ENCODE measurements at regions of chr10 and their contacts with region 1.

Region 1: DNA sequence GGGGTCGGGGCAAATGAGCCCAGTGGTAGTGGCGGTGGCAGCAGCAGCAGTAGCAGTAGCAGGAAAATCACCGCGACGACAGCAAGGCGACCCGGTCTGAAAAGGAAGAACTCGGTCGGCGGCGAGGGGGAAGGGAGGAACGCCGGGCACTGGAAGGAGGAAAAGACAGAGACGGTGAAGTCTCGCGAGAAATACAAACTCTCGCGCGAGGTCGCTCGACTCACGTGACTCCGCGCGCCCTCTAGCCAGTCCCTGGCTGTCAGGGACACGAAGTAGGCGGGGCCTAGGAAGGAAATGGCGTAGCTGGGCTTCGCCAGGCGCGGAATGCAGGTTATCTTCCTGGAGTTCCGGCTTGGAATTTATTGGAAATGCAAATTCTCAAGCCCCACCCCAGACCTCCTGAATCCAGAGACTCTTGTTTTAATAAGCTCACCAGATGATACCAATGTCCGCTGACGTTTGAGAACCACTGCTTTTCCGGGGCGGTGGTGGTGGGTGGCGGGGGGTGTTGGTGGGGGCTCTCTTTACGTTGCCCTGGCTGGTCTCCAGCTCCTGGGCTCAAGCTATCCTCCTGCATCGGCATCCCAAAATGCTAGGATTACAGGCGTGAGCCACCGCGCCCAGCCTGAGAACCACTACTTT is at the start of gene SMNDC1:
- DNase-seq: peak; percentile 97 to 99 (median 98)
- H3K4me3 ChIP-seq: peak within 1 kb of the TSS; percentile 68 to 98 (median 85)
- H3K27ac ChIP-seq: peak within 1 kb of the TSS; percentile 37 to 96 (median 89)
- H3K27me3 ChIP-seq: no peaks in the 10 kb centered on the region
- CTCF ChIP-seq: peak in 37 of 56 donors; percentile 6 to 61 (median 34)
- total RNA-seq, gene SMNDC1: 17.1 to 34.9 (median 25.4) TPM

Region 2: DNA sequence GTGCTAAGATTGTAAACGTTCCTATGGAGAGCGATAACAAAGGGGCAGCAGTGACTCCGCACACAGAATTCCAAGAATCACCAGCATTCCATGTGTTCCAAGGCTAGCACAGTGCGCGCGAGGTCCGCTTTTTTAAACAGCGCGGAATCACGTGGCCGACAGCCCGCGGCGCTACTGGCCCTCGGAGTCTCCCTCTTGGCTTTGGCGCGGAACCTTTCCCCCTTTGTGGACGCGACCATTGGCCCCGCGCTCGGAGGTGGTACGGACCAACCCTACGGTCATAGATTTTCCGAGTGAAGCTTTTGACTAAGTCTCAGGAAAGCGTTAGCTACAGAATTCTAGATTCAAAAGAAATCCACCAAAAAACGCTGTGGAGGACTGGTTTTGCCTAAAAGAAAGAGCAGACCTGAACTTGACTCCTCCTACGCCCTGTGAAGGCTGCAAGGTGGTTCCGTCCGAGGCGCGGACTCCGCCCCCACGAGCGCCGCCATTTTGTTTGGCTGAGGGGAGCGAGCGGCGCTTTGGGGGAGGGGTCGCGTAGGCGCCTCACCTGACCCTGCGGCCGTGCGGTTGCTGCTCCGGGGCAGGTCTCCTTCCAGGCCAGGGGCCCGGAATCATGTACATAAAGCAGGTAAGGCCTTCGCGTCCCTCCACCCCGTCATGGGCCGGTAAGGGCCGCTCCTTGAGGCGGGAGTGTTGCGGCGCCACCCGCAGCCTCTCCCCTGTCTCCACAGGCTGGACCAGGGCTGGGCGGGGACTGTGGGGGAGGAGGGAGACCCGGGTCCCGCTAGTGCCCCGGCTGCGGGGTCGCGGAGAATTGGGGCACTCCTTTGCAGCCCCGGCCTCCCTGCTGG is 262.5 kb after region 1 on chr10 and contains the start of gene SMC3:
- intact Hi-C with region 1: loop called (anchors 5 kb)
- DNase-seq: peak; percentile 89 to 95 (median 92)
- H3K4me3 ChIP-seq: peak within 1 kb of the TSS; percentile 64 to 100 (median 95)
- H3K27ac ChIP-seq: peak within 1 kb of the TSS; percentile 73 to 99 (median 94)
- H3K27me3 ChIP-seq: no peaks in the 10 kb centered on the region
- CTCF ChIP-seq: peak in 27 of 56 donors; percentile 6 to 57 (median 20)
- total RNA-seq, gene SMC3: 20.5 to 34.2 (median 26.0) TPM

Region 3: GRCh38 chr10:110671788-110672579 is 367.1 kb after region 1 on chr10:
- intact Hi-C with region 1: loop called in 1 of 2 experiments (anchors 10 kb)
- DNase-seq: peak; percentile 35 to 72 (median 57)
- H3K4me3 ChIP-seq: peak overlapping the region; percentile 42 to 82 (median 68)
- H3K27ac ChIP-seq: peak overlapping the region in 25 of 59 donors; percentile 8 to 79 (median 57)
- H3K27me3 ChIP-seq: peaks cover 0 to 28% (median 0%) of the 10 kb centered on the region in 45 donors
- CTCF ChIP-seq: peak in 55 of 56 donors; percentile 43 to 89 (median 71)

Region 4: GRCh38 chr10:110918643-110919363 is 613.9 kb after region 1 on chr10 and contains the start of gene BBIP1:
- intact Hi-C with region 1: loop called in 1 of 2 experiments (anchors 10 kb)
- DNase-seq: peak in 4 of 10 donors; percentile 55 to 90 (median 77)
- H3K4me3 ChIP-seq: peak within 1 kb of the TSS; percentile 67 to 97 (median 86)
- H3K27ac ChIP-seq: peak within 1 kb of the TSS; percentile 74 to 100 (median 97)
- H3K27me3 ChIP-seq: no peaks in the 10 kb centered on the region
- CTCF ChIP-seq: peak in 26 of 56 donors; percentile 1 to 37 (median 13)
- total RNA-seq, gene BBIP1: 34.7 to 77.1 (median 51.3) TPM

Region 5: DNA sequence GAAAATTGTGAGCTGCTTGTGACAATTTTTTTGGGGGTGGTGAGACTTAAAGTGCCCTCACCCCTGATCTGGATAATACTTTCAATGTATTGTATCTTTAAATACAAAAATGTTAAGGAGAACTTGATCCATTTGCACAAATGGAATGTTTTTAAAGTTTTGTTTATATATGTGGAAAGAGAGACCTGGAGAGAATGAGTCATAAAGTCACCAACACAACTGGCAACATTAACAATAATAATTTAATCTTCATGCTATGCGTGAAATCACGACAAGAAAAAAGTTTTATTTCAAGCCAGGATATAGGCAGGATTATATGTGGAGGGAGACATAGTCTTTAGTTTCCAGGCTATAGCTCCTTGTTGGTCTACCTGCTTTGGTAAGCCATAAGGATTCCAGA is 1341.1 kb after region 1 on chr10:
- intact Hi-C with region 1: no loop called
- DNase-seq: no peak
- H3K4me3 ChIP-seq: no peak overlapping the region
- H3K27ac ChIP-seq: no peak overlapping the region
- H3K27me3 ChIP-seq: no peaks in the 10 kb centered on the region
- CTCF ChIP-seq: no peak